ENCODE measurements at regions of chr14 and their contacts with region 1.

Region 1: GRCh38 chr14:51996148-51996746 is 6.9 kb downstream of the RTRAF start:
- DNase-seq: no peak
- ATAC-seq: no peak
- H3K4me3 Mint-ChIP-seq: no peak overlapping the region
- H3K27ac Mint-ChIP-seq: no peak overlapping the region
- H3K4me1 Mint-ChIP-seq: peaks cover 19% of the 10 kb centered on the region
- H3K27me3 Mint-ChIP-seq: no peaks in the 10 kb centered on the region
- CTCF ChIP-seq: peak; percentile 29

Region 2: GRCh38 chr14:51972566-51972965 is 23.7 kb before region 1 on chr14:
- CTCF ChIA-PET with region 1: no interaction called
- POLR2A ChIA-PET with region 1: no interaction called
- intact Hi-C with region 1: no loop called
- DNase-seq: no peak
- ATAC-seq: no peak
- H3K4me3 Mint-ChIP-seq: no peak overlapping the region
- H3K27ac Mint-ChIP-seq: no peak overlapping the region
- H3K4me1 Mint-ChIP-seq: no peaks in the 10 kb centered on the region
- H3K27me3 Mint-ChIP-seq: no peaks in the 10 kb centered on the region
- CTCF ChIP-seq: no peak

Region 3: DNA sequence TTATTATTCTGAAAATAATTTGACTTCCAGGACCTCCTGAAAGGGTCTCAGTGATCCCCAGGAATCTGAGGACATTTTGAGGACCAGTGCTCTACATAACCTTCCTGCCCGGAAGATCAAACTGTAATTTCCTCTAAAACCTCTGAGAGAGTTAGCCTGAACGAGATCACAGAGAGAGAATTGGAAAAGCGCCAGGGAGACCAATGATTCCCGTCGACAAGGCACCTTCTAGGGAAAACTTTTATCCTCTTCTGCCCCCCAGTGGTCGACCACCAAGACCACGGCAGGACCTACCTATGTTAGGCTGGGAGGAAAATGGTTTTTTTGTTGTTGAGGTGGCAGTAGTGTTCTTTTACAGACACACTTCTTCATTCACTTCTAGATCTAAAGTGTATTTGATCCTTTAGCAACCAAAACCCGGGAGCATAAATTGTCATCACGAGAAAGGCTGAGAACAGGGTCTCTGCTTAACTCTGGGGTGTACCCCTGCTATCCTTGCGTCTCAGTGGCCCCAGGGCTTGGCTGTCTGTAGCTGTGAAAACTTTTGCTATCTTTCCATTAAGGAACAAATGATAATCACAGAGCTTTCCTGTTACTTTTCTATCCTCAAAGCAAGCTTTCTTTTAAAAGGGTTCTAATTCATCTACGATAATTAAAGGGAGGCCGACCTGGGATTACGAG is 135.5 kb after region 1 on chr14:
- CTCF ChIA-PET with region 1: interaction called, 3 read pairs
- POLR2A ChIA-PET with region 1: no interaction called
- intact Hi-C with region 1: loop called (anchors 1 kb)
- DNase-seq: no peak
- ATAC-seq: peak; percentile 25
- H3K4me3 Mint-ChIP-seq: no peak overlapping the region
- H3K27ac Mint-ChIP-seq: no peak overlapping the region
- H3K4me1 Mint-ChIP-seq: peaks cover 7% of the 10 kb centered on the region
- H3K27me3 Mint-ChIP-seq: peaks cover 6% of the 10 kb centered on the region
- CTCF ChIP-seq: no peak

Region 4: GRCh38 chr14:52272375-52272774 is 276.1 kb after region 1 on chr14:
- CTCF ChIA-PET with region 1: interaction called, 3 read pairs
- POLR2A ChIA-PET with region 1: no interaction called
- intact Hi-C with region 1: loop called (anchors 1 kb)
- DNase-seq: no peak
- ATAC-seq: no peak
- H3K4me3 Mint-ChIP-seq: no peak overlapping the region
- H3K27ac Mint-ChIP-seq: no peak overlapping the region
- H3K4me1 Mint-ChIP-seq: peaks cover 18% of the 10 kb centered on the region
- H3K27me3 Mint-ChIP-seq: peaks cover 39% of the 10 kb centered on the region
- CTCF ChIP-seq: no peak

Region 5: DNA sequence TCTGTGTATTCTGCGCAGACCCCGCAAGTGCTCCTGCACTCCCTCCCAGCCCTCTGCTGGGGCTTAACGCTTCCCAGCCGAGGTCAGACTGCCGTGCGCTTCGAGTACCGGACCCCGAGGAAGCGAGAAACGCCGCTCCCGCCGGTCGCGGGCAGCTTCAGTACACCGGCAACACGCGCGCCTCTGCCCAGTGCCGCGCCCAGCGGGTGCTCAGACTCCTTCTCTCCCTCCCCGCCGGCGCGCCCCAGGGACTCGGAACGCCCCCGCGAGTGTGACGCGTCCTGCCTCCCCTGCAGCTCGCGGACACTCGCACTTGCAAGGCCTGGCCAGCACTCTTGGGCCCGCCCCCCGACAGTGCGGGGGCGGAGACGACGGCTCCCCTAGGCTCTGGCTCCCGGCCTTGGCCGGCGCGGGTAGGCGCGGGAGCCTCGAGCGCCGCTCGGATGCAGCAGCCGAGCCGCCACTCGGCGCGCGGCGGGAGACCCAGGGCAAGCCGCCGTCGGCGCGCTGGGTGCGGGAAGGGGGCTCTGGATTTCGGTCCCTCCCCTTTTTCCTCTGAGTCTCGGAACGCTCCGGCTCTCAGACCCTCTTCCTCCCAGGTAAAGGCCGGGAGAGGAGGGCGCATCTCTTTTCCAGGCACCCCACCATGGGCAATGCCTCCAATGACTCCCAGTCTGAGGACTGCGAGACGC is 317.8 kb after region 1 on chr14 and contains the start of gene PTGER2:
- CTCF ChIA-PET with region 1: no interaction called
- POLR2A ChIA-PET with region 1: no interaction called
- intact Hi-C with region 1: loop called (anchors 1 kb)
- DNase-seq: peak; percentile 44
- ATAC-seq: peak; percentile 55
- H3K4me3 Mint-ChIP-seq: peak within 1 kb of the TSS; percentile 88
- H3K27ac Mint-ChIP-seq: peak within 1 kb of the TSS; percentile 4
- H3K4me1 Mint-ChIP-seq: peaks cover 50% of the 10 kb centered on the region
- H3K27me3 Mint-ChIP-seq: peaks cover 50% of the 10 kb centered on the region
- CTCF ChIP-seq: no peak
- total RNA-seq, gene PTGER2: 0.09 and 0.12 TPM in 2 replicates

Region 6: GRCh38 chr14:52473557-52473956 is 477.3 kb after region 1 on chr14:
- CTCF ChIA-PET with region 1: interaction called, 3 read pairs
- POLR2A ChIA-PET with region 1: no interaction called
- intact Hi-C with region 1: loop called (anchors 1 kb)
- DNase-seq: no peak
- ATAC-seq: no peak
- H3K4me3 Mint-ChIP-seq: no peak overlapping the region
- H3K27ac Mint-ChIP-seq: no peak overlapping the region
- H3K4me1 Mint-ChIP-seq: no peaks in the 10 kb centered on the region
- H3K27me3 Mint-ChIP-seq: no peaks in the 10 kb centered on the region
- CTCF ChIP-seq: no peak